CD4-positive, alpha-beta memory T cell (primary cell): ENCODE measurements at regions of chr10 and their contacts with region 1.

Region 1: DNA sequence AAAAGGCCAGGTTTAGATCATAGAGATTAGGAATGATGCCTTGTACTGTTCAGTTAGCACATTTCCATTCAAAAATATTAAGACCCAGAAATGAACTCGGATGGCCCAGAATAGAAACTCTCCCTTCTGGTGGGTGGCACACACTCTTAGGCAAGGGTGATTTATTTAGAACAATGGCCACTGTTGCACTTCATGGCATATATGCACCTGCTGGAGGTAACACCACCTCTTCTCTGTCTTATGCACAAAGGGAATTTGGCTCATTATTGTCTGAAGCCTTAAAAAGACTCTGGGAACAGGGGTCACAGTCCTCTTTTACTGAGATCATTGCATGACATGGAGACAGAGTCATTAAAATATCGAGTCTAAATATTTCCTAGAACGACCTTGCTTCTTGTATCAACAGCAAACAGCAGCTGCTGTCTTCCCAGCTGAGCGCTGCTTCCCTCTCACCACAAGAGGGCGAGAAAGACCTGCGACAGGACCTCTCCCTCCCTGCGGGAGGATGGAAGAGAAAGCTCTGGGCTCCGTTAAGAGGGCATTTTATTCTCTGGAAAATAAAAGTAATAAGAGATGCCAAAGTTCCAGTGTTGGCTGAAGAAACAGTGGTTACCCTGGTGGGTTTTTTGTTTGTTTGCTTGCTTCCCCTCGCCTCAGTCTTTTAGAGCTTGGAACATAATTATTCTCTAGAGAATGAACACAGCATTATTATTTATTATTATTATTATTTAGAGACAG is 13.6 kb upstream of the BAMBI start:
- DNase-seq: peak; percentile 50 to 67 (median 61)
- H3K4me3 ChIP-seq: no peak overlapping the region
- H3K4me3 Mint-ChIP-seq: no peak overlapping the region
- H3K27ac ChIP-seq: no peak overlapping the region
- H3K27ac Mint-ChIP-seq: peak overlapping the region in 1 of 7 donors; percentile 29
- H3K4me1 ChIP-seq: no peaks in the 10 kb centered on the region
- H3K4me1 Mint-ChIP-seq: peaks cover 6 to 9% (median 8%) of the 10 kb centered on the region in 4 donors
- H3K27me3 ChIP-seq: peaks cover 17% of the 10 kb centered on the region
- H3K27me3 Mint-ChIP-seq: peaks cover 33 to 37% of the 10 kb centered on the region in 2 donors

Region 2: DNA sequence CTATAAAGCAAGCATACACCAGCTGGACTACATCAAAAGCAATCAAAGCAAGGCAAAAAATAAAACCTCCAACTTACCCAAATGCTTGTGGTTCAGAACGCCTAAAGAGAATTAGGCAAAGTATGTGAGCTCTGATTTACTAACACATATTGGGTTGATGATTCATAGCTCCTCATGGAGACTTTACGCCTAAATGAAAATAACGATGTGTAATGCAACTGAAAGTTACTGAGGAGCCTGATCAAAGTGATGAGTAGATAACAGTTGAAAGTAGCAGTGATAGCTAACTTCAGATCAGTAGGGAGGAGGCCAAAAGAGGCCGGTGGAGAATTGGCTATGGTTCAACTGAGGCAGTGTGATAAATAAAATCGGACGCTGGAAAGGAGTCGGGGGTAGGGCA is 445.9 kb before region 1 on chr10:
- CTCF ChIA-PET with region 1: no interaction called
- POLR2A ChIA-PET with region 1: no interaction called
- intact Hi-C with region 1: no loop called
- DNase-seq: peak in 1 of 5 donors; percentile 0
- H3K4me3 ChIP-seq: no peak overlapping the region
- H3K4me3 Mint-ChIP-seq: peak overlapping the region in 5 of 8 donors; percentile 1 to 24 (median 16)
- H3K27ac ChIP-seq: no peak overlapping the region
- H3K27ac Mint-ChIP-seq: peak overlapping the region in 2 of 7 donors; percentile 2 to 68
- H3K4me1 ChIP-seq: peaks cover 12% of the 10 kb centered on the region
- H3K4me1 Mint-ChIP-seq: peaks cover 13 to 43% (median 32%) of the 10 kb centered on the region in 4 donors
- H3K27me3 ChIP-seq: no peaks in the 10 kb centered on the region
- H3K27me3 Mint-ChIP-seq: no peaks in the 10 kb centered on the region

Region 3: GRCh38 chr10:28569506-28570159 is 94.1 kb before region 1 on chr10:
- CTCF ChIA-PET with region 1: no interaction called
- POLR2A ChIA-PET with region 1: no interaction called
- intact Hi-C with region 1: no loop called
- DNase-seq: no peak
- H3K4me3 ChIP-seq: no peak overlapping the region
- H3K4me3 Mint-ChIP-seq: peak overlapping the region in 5 of 8 donors; percentile 10 to 55 (median 27)
- H3K27ac ChIP-seq: no peak overlapping the region
- H3K27ac Mint-ChIP-seq: peak overlapping the region in 5 of 7 donors; percentile 14 to 82 (median 34)
- H3K4me1 ChIP-seq: peaks cover 95% of the 10 kb centered on the region
- H3K4me1 Mint-ChIP-seq: peaks cover 59 to 97% (median 77%) of the 10 kb centered on the region in 4 donors
- H3K27me3 ChIP-seq: no peaks in the 10 kb centered on the region
- H3K27me3 Mint-ChIP-seq: no peaks in the 10 kb centered on the region

Region 4: DNA sequence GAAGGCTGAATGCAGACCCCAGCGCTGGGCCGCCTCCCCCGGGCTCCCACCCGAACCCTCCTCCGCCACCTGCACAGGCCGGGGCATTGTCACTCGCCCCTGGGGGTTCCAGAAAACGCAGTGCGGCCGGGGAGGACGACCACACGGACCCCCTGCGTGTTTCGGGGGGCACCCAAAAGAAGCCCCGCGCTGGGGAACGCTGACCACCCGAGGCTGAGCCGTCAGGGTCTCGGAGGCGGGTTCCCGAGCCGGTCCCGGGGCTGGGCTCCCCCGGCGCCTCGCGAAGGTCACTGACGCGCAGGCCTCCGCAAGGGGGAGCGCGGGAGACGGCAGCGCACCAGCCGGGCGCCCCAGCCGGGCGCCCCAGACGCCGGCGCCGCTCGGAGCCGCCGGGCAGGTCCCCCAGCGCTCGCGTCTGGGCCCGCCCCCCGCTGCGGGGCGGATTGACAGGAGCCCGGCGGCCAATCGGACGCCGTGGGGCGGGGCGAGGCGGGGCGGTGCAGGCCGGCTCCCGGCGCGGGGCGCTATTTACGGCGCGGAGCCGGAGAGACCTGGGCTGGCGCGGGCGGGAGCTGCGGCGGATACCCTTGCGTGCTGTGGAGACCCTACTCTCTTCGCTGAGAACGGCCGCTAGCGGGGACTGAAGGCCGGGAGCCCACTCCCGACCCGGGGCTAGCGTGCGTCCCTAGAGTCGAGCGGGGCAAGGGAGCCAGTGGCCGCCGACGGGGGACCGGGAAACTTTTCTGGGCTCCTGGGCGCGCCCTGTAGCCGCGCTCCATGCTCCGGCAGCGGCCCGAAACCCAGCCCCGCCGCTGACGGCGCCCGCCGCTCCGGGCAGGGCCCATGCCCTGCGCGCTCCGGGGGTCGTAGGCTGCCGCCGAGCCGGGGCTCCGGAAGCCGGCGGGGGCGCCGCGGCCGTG is 13.5 kb after region 1 on chr10 and contains the start of gene BAMBI:
- CTCF ChIA-PET with region 1: interaction called, 20 read pairs
- POLR2A ChIA-PET with region 1: no interaction called
- intact Hi-C with region 1: no loop called
- DNase-seq: peak; percentile 88 to 92 (median 90)
- H3K4me3 ChIP-seq: peak within 1 kb of the TSS; percentile 7 to 49
- H3K4me3 Mint-ChIP-seq: peak within 1 kb of the TSS; percentile 79 to 91 (median 84)
- H3K27ac ChIP-seq: no peak within 1 kb of the TSS
- H3K27ac Mint-ChIP-seq: peak within 1 kb of the TSS in 6 of 7 donors; percentile 11 to 71 (median 46)
- H3K4me1 ChIP-seq: peaks cover 26% of the 10 kb centered on the region
- H3K4me1 Mint-ChIP-seq: peaks cover 14 to 30% (median 22%) of the 10 kb centered on the region in 4 donors
- H3K27me3 ChIP-seq: peaks cover 34% of the 10 kb centered on the region
- H3K27me3 Mint-ChIP-seq: peaks cover 34 to 44% of the 10 kb centered on the region in 2 donors
- total RNA-seq, gene BAMBI: 0.29 TPM in 1 of 2 experiments, not detected in the other

Region 5: GRCh38 chr10:28991326-28992270 is 327.9 kb after region 1 on chr10:
- CTCF ChIA-PET with region 1: interaction called, 26 read pairs
- POLR2A ChIA-PET with region 1: no interaction called
- intact Hi-C with region 1: no loop called
- DNase-seq: peak in 4 of 5 donors; percentile 6 to 17 (median 12)
- H3K4me3 ChIP-seq: no peak overlapping the region
- H3K4me3 Mint-ChIP-seq: no peak overlapping the region
- H3K27ac ChIP-seq: no peak overlapping the region
- H3K27ac Mint-ChIP-seq: no peak overlapping the region
- H3K4me1 ChIP-seq: no peaks in the 10 kb centered on the region
- H3K4me1 Mint-ChIP-seq: no peaks in the 10 kb centered on the region
- H3K27me3 ChIP-seq: no peaks in the 10 kb centered on the region
- H3K27me3 Mint-ChIP-seq: peaks cover 1 to 7% of the 10 kb centered on the region in 2 donors

Region 6: GRCh38 chr10:29304264-29305030 is 640.7 kb after region 1 on chr10:
- CTCF ChIA-PET with region 1: interaction called, 10 read pairs
- POLR2A ChIA-PET with region 1: no interaction called
- intact Hi-C with region 1: loop called (anchors 1 kb)
- DNase-seq: peak in 4 of 5 donors; percentile 6 to 28 (median 16)
- H3K4me3 ChIP-seq: no peak overlapping the region
- H3K4me3 Mint-ChIP-seq: no peak overlapping the region
- H3K27ac ChIP-seq: no peak overlapping the region
- H3K27ac Mint-ChIP-seq: no peak overlapping the region
- H3K4me1 ChIP-seq: no peaks in the 10 kb centered on the region
- H3K4me1 Mint-ChIP-seq: peaks cover 0 to 5% (median 1%) of the 10 kb centered on the region in 4 donors
- H3K27me3 ChIP-seq: no peaks in the 10 kb centered on the region
- H3K27me3 Mint-ChIP-seq: peaks cover 23 to 25% of the 10 kb centered on the region in 2 donors

Region 7: GRCh38 chr10:29392376-29393021 is 728.8 kb after region 1 on chr10:
- CTCF ChIA-PET with region 1: interaction called, 5 read pairs
- POLR2A ChIA-PET with region 1: no interaction called
- intact Hi-C with region 1: loop called (anchors 1 kb)
- DNase-seq: peak in 3 of 5 donors; percentile 15 to 24 (median 18)
- H3K4me3 ChIP-seq: no peak overlapping the region
- H3K4me3 Mint-ChIP-seq: no peak overlapping the region
- H3K27ac ChIP-seq: no peak overlapping the region
- H3K27ac Mint-ChIP-seq: no peak overlapping the region
- H3K4me1 ChIP-seq: no peaks in the 10 kb centered on the region
- H3K4me1 Mint-ChIP-seq: peaks cover 0 to 4% (median 0%) of the 10 kb centered on the region in 4 donors
- H3K27me3 ChIP-seq: no peaks in the 10 kb centered on the region
- H3K27me3 Mint-ChIP-seq: peaks cover 8 to 11% of the 10 kb centered on the region in 2 donors

Region 8: GRCh38 chr10:29496341-29497162 is 832.8 kb after region 1 on chr10:
- CTCF ChIA-PET with region 1: interaction called, 6 read pairs
- POLR2A ChIA-PET with region 1: no interaction called
- intact Hi-C with region 1: loop called (anchors 2 kb)
- DNase-seq: peak in 4 of 5 donors; percentile 26 to 39 (median 28)
- H3K4me3 ChIP-seq: no peak overlapping the region
- H3K4me3 Mint-ChIP-seq: no peak overlapping the region
- H3K27ac ChIP-seq: no peak overlapping the region
- H3K27ac Mint-ChIP-seq: peak overlapping the region in 1 of 7 donors; percentile 36
- H3K4me1 ChIP-seq: no peaks in the 10 kb centered on the region
- H3K4me1 Mint-ChIP-seq: peaks cover 0 to 10% (median 5%) of the 10 kb centered on the region in 4 donors
- H3K27me3 ChIP-seq: no peaks in the 10 kb centered on the region
- H3K27me3 Mint-ChIP-seq: no peaks in the 10 kb centered on the region